ENCODE measurements at regions of chr1 and their contacts with region 1.

Region 1: DNA sequence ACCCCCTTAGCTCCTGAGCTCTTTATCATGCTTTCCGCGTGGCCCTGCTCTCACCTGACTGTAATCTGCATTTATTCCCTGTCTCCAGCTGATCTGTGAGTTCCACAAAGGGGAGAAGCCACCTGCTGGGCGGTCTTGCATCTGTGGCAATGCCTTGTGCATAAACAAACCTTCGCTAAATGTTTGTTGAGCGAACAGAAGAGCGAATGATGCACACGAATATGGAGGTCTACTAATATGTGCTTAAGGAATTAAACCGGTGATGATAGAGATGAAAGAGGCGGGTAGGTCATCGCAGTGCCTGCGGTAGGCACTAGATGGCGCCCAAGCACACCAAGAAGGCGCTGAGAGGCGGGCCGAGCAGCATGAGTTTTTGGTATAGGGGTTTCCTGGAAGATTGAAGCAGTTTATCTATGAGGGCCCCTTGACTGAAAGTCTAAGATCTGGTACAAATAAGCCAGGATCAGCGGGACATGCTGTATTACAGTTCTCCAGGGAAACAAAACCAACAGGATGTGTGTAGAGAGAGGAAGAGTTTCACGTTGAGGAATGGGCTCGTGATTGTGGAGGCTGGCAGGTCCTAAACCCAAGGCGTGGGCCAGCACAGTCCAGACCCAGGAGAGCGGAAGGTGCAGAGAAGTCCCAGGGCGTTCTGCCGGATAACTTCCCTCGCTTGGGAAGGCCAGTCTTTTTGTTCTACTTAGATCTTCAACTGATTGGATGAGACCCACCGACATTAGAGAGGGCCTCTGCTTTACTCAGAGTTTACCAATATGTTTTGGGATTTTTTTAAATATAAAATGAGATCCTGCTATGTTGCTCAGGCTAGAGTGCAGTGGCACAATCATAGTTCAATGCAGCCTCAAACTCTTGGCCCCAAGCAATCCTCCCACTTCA is 34.7 kb downstream of the TOMM20 start:
- DNase-seq: peak; percentile 82 to 89 (median 88)
- ATAC-seq: peak; percentile 88
- H3K4me3 ChIP-seq: no peak overlapping the region
- H3K27ac ChIP-seq: no peak overlapping the region; the same call in 2 of the 3 replicates
- H3K4me1 ChIP-seq: peaks cover 14 to 18% of the 10 kb centered on the region in 2 experiments
- H3K27me3 ChIP-seq: no peaks in the 10 kb centered on the region
- CTCF ChIP-seq: peak; percentile 92 to 98 (median 96)
- EP300 ChIP-seq: no peak
- POLR2A ChIP-seq: no peak
- RAD21 ChIP-seq: peak; percentile 84 to 96

Region 2: DNA sequence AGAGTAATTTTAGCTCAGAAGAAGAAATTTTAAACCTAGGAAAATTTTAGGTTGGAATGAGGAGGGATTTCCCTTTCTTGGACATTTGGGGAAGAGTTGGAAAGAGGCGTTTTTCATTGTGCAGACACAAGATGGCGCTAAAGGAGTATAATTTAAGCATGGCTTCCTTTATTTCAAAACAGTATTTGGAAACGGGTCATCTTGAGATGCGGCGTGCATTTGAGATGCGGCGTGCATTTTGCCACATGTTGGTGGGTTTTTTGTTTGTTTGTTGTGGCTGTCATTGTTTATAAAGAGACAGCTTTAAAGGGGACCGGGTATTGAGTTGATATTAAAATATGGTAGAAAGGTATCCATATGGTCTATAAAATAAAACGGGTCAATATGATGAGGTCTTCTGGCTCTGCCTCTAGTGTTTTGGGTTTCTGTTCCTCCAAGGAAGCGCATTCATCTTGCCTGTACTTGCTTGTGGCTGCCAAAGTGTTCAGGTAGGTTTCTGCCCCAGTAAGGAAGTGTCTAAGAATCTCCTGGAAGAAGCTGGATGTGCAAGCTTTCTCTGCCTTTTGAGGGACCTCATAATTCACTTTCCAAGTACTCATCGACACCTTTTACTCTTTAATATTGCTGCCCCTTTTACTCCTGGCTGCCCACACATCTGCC is 979.2 kb before region 1 on chr1:
- CTCF ChIA-PET with region 1: no interaction called
- POLR2A ChIA-PET with region 1: no interaction called
- in situ Hi-C with region 1: no loop called
- intact Hi-C with region 1: loop called (anchors 5 kb)
- DNase-seq: peak; percentile 35 to 57 (median 41)
- ATAC-seq: peak; percentile 76
- H3K4me3 ChIP-seq: no peak overlapping the region
- H3K27ac ChIP-seq: no peak overlapping the region
- H3K4me1 ChIP-seq: 0 out of 5 replicates have a peak, but pooled peaks cover 0 to 3% of the 10 kb centered on the region in 2 experiments
- H3K27me3 ChIP-seq: peaks cover 7 to 22% of the 10 kb centered on the region in 2 experiments; a peak in 4 of 5 replicates
- CTCF ChIP-seq: peak; percentile 59 to 86 (median 75)
- EP300 ChIP-seq: no peak
- POLR2A ChIP-seq: no peak
- RAD21 ChIP-seq: peak; percentile 65 to 73

Region 3: GRCh38 chr1:234326497-234327366 is 767.2 kb before region 1 on chr1:
- CTCF ChIA-PET with region 1: no interaction called
- POLR2A ChIA-PET with region 1: no interaction called
- in situ Hi-C with region 1: loop called (anchors 10 kb)
- intact Hi-C with region 1: loop called (anchors 5 kb)
- DNase-seq: peak; percentile 71 to 78 (median 75)
- ATAC-seq: peak; percentile 90
- H3K4me3 ChIP-seq: no peak overlapping the region
- H3K27ac ChIP-seq: no peak overlapping the region
- H3K4me1 ChIP-seq: no peaks in the 10 kb centered on the region; a peak in 3 of 5 replicates
- H3K27me3 ChIP-seq: peaks cover 17 to 27% of the 10 kb centered on the region in 2 experiments
- CTCF ChIP-seq: peak; percentile 83 to 94 (median 84)
- EP300 ChIP-seq: no peak
- POLR2A ChIP-seq: no peak
- RAD21 ChIP-seq: peak; percentile 47 to 67; a peak in 3 of 4 replicates

Region 4: GRCh38 chr1:234486498-234487448 is 607.2 kb before region 1 on chr1:
- CTCF ChIA-PET with region 1: interaction called, 20 read pairs
- POLR2A ChIA-PET with region 1: no interaction called
- in situ Hi-C with region 1: no loop called
- intact Hi-C with region 1: loop called (anchors 1 kb)
- DNase-seq: peak in 2 of 4 experiments; percentile 45 to 64
- ATAC-seq: peak; percentile 83
- H3K4me3 ChIP-seq: no peak overlapping the region
- H3K27ac ChIP-seq: no peak overlapping the region
- H3K4me1 ChIP-seq: peaks cover 0 to 15% of the 10 kb centered on the region in 2 experiments; a peak in 3 of 5 replicates
- H3K27me3 ChIP-seq: peaks cover 0 to 7% of the 10 kb centered on the region in 2 experiments; a peak in 1 of 5 replicates
- CTCF ChIP-seq: peak; percentile 67 to 84 (median 77)
- EP300 ChIP-seq: no peak
- POLR2A ChIP-seq: no peak
- RAD21 ChIP-seq: peak; percentile 89 to 95

Region 5: DNA sequence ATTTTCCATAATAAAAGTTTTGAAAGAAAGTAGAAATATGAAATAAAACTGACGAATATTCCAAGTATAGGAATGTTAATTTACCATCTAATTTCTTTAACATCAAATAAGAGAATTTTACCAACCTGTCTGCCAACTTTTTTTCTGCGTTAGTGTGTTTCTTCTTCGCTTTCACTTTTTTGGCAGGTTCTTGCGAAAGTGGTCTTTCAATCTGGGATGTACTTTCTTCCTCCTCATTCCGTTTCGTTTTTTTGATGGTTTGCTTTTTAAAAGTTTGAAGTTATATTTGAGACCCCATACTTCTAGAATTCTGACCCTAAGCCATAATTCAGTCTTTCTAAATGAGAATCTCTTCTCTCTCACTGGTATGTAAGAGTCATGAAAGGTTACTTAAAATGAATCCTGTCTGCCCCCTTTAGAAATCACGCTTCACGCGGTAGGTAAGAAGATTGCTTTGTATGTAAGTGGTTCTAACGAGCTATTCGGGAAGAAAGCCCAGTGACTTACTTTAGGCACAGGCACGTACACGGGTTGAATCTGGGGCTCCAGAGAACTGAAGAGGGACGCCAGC is 66.5 kb after region 1 on chr1:
- CTCF ChIA-PET with region 1: no interaction called
- POLR2A ChIA-PET with region 1: no interaction called
- in situ Hi-C with region 1: no loop called
- intact Hi-C with region 1: no loop called
- DNase-seq: no peak
- ATAC-seq: peak; percentile 65
- H3K4me3 ChIP-seq: peak overlapping the region; percentile 78
- H3K27ac ChIP-seq: peak overlapping the region; percentile 92
- H3K4me1 ChIP-seq: peaks cover 7 to 9% of the 10 kb centered on the region in 2 experiments; a peak in 3 of 5 replicates
- H3K27me3 ChIP-seq: no peaks in the 10 kb centered on the region; a peak in 1 of 5 replicates
- CTCF ChIP-seq: no peak
- EP300 ChIP-seq: no peak
- POLR2A ChIP-seq: no peak
- RAD21 ChIP-seq: no peak

Region 6: DNA sequence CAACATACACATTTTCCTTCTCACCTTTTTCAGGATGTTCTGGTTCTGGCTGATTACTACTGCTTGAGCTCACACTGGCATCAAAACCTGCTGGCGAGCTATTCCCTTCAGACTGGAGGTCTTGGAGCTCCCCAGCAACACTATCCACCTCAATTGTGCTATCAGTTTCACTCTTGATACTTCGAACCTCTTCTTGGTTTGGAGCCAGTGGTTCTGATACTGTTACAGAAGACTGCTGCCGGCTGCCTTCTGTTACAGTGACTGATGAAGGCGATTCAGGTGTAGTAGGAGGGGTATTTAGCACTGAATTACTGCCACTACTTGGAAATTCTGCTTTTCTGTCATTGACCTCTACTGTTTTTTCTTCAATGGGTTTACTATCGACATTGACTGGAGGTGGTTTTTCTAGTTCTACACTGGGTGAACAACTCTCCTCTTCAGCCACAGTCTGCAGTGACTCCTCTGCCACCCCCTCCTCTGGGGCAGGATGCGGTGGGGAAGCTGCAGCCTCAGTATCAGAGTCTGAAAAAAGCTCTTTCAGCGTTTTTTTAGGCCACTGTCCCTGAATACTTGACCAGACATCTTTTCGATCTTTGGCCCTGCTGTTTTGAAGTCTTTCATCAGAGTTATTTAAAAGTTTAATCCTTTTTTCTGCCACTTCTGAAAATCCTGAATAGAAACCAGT is 87.8 kb after region 1 on chr1:
- CTCF ChIA-PET with region 1: no interaction called
- POLR2A ChIA-PET with region 1: no interaction called
- in situ Hi-C with region 1: no loop called
- intact Hi-C with region 1: no loop called
- DNase-seq: no peak
- ATAC-seq: no peak; the same call in 1 of the 3 replicates
- H3K4me3 ChIP-seq: no peak overlapping the region
- H3K27ac ChIP-seq: no peak overlapping the region
- H3K4me1 ChIP-seq: no peaks in the 10 kb centered on the region
- H3K27me3 ChIP-seq: no peaks in the 10 kb centered on the region
- CTCF ChIP-seq: no peak
- EP300 ChIP-seq: no peak
- POLR2A ChIP-seq: no peak
- RAD21 ChIP-seq: no peak

Region 7: DNA sequence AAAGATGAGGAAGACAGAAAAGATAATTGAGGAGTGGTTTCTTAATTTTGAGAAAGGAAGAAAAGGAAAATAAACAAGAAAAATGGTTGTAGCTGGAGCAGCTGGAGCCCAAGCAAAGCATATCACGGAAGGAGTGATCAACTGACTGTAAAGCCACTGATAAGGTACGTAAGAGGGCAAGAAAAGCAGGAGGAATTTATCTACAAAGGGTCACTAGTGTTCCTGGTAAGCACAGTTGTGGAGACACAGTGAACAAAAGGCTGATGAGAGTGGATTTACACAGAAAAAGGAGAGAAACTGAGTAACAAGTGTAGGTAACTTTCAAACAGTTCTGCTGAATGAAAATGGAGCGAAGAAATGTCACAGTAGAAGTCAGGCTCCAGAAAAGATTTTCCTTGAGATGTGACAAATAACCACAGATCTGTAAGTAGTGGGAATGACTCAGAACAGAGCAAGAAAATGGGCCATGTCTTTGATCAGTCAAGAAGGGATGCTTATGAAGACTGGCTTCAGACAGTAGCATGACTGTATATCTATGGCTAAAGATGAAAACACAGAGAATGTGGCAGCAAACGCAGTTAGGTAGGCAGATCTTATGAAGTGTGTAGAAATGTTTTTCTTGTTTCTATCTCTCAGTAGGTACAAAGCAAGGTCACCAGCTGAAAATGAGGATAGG is 112.7 kb after region 1 on chr1:
- CTCF ChIA-PET with region 1: no interaction called
- POLR2A ChIA-PET with region 1: no interaction called
- in situ Hi-C with region 1: no loop called
- intact Hi-C with region 1: no loop called
- DNase-seq: peak in 3 of 4 experiments; percentile 17 to 41 (median 34)
- ATAC-seq: peak; percentile 79
- H3K4me3 ChIP-seq: no peak overlapping the region
- H3K27ac ChIP-seq: peak overlapping the region; percentile 3; the same call in 1 of the 3 replicates
- H3K4me1 ChIP-seq: peaks cover 0 to 15% of the 10 kb centered on the region in 2 experiments; a peak in 2 of 5 replicates
- H3K27me3 ChIP-seq: no peaks in the 10 kb centered on the region
- CTCF ChIP-seq: no peak
- EP300 ChIP-seq: no peak
- POLR2A ChIP-seq: no peak; the same call in 1 of the 2 replicates
- RAD21 ChIP-seq: no peak

Region 8: DNA sequence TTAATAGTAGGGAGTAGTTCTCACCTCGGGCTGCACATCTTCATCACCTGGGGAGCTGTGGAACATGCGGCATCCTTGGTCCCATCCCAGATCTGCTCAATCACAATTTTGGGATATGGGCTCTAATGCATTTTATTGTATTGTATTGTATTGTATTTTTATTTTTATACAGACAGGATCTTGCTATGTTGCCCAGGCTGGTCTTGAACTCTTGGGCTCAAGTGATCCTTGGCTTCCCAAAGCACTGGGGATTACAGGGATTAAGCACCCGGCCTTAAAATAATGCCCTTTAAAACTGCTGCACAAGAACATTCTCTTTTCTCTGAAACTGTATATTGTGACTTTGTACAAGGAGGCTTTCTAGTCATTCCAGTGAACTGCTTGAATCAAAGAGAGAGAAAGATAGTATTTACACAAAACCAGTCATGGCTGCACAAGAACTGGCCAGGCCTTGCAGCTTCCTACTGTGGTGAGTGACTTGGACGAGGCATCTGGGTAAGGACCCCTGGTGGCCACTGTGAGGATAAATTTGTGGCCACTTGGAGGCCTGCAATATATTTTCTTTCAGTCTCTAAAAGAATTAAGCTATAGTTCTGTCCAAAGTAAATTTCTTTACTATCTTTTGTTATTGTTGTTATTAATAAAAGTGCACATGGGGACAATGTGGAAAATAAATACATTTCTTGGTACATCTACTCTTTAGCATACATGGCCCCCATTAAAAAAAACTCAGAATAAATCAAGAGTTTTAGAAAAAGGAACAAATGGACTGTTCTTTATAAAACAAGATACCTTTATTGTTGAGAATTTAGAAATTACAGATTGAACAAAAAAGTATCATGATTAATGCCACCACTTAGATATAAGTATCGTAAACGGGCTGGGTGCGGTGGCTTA is 321.3 kb after region 1 on chr1:
- CTCF ChIA-PET with region 1: interaction called, 10 read pairs
- POLR2A ChIA-PET with region 1: no interaction called
- in situ Hi-C with region 1: loop called (anchors 10 kb)
- intact Hi-C with region 1: loop called (anchors 1 kb)
- DNase-seq: peak; percentile 73 to 84 (median 76)
- ATAC-seq: peak; percentile 95
- H3K4me3 ChIP-seq: no peak overlapping the region
- H3K27ac ChIP-seq: no peak overlapping the region
- H3K4me1 ChIP-seq: peaks cover 0 to 2% of the 10 kb centered on the region in 2 experiments; a peak in 3 of 5 replicates
- H3K27me3 ChIP-seq: no peaks in the 10 kb centered on the region
- CTCF ChIP-seq: peak; percentile 90 to 96 (median 93)
- EP300 ChIP-seq: no peak
- POLR2A ChIP-seq: no peak
- RAD21 ChIP-seq: peak; percentile 73 to 84

Region 9: DNA sequence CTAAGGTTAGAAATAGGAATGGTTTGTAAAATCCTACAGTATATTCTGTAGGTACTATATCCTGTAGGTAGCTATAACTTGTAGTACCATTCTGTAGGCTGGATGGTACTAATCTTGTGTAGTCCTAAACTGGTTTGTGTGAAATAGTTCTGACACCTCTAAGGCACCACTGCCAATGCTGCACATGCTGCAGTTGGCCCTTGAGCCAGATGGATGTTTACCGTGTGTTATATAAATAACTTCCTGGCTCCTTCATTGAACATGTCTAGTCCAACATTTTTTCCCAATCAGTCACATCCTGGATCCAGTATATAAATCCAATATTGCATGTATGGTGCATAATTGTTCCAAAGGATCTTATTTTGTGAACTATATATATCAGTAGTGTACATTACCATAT is 645.2 kb after region 1 on chr1:
- CTCF ChIA-PET with region 1: no interaction called
- POLR2A ChIA-PET with region 1: no interaction called
- in situ Hi-C with region 1: no loop called
- intact Hi-C with region 1: loop called (anchors 5 kb)
- DNase-seq: no peak
- ATAC-seq: no peak
- H3K4me3 ChIP-seq: no peak overlapping the region
- H3K27ac ChIP-seq: no peak overlapping the region
- H3K4me1 ChIP-seq: no peaks in the 10 kb centered on the region
- H3K27me3 ChIP-seq: peaks cover 4 to 5% of the 10 kb centered on the region in 2 experiments; a peak in 3 of 5 replicates
- CTCF ChIP-seq: no peak
- EP300 ChIP-seq: no peak
- POLR2A ChIP-seq: no peak
- RAD21 ChIP-seq: no peak

Region 10: GRCh38 chr1:235791532-235792060 is 697.7 kb after region 1 on chr1:
- CTCF ChIA-PET with region 1: no interaction called
- POLR2A ChIA-PET with region 1: no interaction called
- in situ Hi-C with region 1: loop called (anchors 10 kb)
- intact Hi-C with region 1: no loop called
- DNase-seq: no peak
- ATAC-seq: no peak
- H3K4me3 ChIP-seq: no peak overlapping the region
- H3K27ac ChIP-seq: no peak overlapping the region
- H3K4me1 ChIP-seq: no peaks in the 10 kb centered on the region
- H3K27me3 ChIP-seq: peaks cover 4 to 6% of the 10 kb centered on the region in 2 experiments; a peak in 2 of 5 replicates
- CTCF ChIP-seq: no peak
- EP300 ChIP-seq: no peak
- POLR2A ChIP-seq: no peak
- RAD21 ChIP-seq: no peak

Region 11: DNA sequence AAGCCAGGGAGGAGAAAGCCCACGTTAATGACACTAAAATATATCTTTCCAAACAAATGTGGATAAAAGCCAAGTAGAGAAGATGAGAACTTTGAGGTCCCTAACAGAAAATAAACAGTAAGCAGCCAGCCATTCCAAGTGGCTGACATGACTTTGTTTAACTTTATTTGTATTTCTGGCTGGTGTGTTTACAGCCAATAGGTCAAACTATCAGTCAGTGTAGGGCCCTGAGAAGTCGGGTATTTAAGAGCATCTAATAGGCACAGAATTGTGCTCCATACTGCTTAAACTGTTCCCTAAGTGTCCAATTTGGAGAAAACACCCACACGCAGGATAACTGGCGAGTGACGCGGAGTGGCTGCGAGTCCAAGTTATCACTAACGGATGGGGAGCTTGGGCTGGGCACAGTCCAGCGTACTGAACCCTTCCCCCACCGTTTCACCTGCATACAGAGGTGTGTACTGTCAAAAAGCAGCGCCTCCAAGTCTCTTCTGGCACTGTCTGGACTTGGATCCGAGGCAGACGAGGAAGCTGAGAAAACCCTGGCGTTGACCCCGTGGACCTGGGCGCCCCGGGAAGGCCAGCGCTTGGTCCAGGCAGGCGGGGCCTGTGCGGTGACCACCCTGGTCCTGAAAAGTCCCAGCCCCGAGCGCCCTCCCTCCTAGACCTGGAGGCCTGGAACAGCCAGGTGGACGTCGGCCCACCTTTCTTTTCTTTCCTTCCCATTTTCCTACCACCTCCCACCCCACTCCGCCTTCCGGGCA is 1429.2 kb after region 1 on chr1:
- CTCF ChIA-PET with region 1: no interaction called
- POLR2A ChIA-PET with region 1: no interaction called
- in situ Hi-C with region 1: no loop called
- intact Hi-C with region 1: no loop called
- DNase-seq: peak in 1 of 4 experiments; percentile 22
- ATAC-seq: peak; percentile 25
- H3K4me3 ChIP-seq: peak overlapping the region; percentile 91
- H3K27ac ChIP-seq: peak overlapping the region; percentile 79
- H3K4me1 ChIP-seq: peaks cover 6 to 13% of the 10 kb centered on the region in 2 experiments; a peak in 4 of 5 replicates
- H3K27me3 ChIP-seq: no peaks in the 10 kb centered on the region
- CTCF ChIP-seq: no peak
- EP300 ChIP-seq: no peak
- POLR2A ChIP-seq: no peak
- RAD21 ChIP-seq: no peak